PC-3 (cell line): ENCODE measurements at regions of chr11 and their contacts with region 1.

Region 1: DNA sequence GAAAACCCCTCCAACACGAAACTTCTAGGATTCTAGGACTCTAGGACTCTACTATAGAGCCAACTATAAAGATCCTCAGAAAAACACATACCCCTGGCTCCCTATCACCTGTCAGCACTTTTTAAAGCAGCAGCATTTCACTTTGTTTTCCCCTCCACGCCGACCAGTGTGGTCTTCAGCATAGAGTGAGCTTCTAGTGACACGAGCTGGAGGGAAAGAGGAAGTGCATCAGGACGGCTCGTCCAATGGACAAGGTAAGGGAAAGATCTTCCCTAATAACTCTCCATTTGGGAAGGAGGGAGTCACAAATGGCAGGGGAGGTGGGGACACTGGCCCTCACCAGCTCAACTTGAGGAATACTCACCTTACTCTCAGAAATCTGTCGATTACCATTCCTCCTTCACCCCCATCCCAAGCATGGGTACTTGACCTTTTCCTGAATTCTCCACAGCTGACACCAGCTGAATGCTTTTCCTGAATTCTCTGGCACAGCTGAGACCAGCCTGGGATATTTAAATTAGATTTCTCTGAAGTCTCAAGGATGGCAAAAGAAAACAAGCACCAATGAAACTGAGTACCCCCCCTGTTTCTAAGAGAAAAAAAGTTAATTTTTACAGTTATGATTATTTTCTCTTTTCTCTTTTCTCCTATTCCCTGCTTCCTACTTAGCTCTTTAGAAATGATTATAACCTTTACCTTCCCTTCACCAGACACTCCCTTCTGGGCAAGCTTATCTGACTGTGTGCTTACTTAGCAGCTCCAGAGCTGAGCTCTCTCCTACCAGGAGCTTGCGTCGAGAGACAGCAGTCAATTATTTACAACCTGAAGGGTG is 33.3 kb upstream of the NNMT start:
- DNase-seq: peak; percentile 74
- ATAC-seq: peak; percentile 80
- H3K4me3 ChIP-seq: no peak overlapping the region
- H3K27ac ChIP-seq: no peak overlapping the region
- H3K4me1 ChIP-seq: no peaks in the 10 kb centered on the region
- H3K27me3 ChIP-seq: peaks cover 67% of the 10 kb centered on the region
- CTCF ChIP-seq: peak; percentile 89

Region 2: DNA sequence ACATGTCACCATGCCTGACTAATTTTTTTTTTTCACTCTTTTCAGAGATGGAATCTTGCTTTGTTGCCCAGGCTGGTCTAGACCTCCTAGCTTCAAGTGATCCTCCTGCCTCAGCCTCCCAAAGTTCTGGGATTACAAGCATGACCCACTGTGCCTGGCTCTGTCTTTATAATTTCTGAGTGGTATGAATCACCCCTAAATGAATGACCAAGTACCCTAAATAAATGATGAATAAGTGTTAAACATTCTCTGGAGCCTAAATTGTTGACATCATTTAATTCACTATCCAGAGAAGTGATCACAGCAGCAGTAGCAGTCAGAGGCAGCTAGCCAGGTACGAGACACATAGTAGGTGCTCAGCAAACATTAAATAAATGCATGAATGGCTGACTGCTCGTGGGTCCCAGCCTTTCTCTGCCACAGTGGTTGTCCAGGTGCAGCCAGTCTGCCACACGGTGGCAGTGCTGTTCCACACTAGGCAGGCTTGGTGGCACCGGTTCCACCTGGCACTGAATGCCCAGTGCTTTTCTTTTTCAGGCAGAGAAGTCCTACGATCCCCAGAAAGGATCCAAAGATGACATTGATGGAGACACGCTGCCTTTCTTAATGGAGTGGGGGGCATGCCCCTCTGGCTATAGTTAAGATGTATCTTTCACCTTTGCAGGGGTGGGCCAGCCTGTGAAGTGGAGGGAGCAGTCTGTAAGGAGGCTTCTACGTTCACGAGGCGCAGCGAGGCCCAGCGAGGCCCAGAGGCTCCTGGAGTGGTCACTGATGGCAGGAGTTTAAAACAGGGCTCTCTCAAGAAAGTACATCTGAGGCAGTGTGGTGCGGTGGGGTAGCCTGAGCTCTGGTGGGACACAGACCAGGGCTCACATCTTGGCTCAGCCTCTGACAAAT is 957.2 kb before region 1 on chr11:
- CTCF ChIA-PET with region 1: no interaction called
- POLR2A ChIA-PET with region 1: no interaction called
- intact Hi-C with region 1: loop called (anchors 5 kb)
- DNase-seq: peak; percentile 90
- ATAC-seq: peak; percentile 100
- H3K4me3 ChIP-seq: no peak overlapping the region
- H3K27ac ChIP-seq: no peak overlapping the region
- H3K4me1 ChIP-seq: 0 out of 2 replicates have a peak, but pooled peaks cover 4% of the 10 kb centered on the region
- H3K27me3 ChIP-seq: peaks cover 3% of the 10 kb centered on the region; the same call in 1 of the 2 replicates
- CTCF ChIP-seq: peak; percentile 99

Region 3: GRCh38 chr11:113806406-113806805 is 456.5 kb before region 1 on chr11:
- CTCF ChIA-PET with region 1: interaction called, 3 read pairs
- POLR2A ChIA-PET with region 1: no interaction called
- intact Hi-C with region 1: loop called (anchors 2 kb)
- DNase-seq: peak; percentile 59
- ATAC-seq: peak; percentile 92
- H3K4me3 ChIP-seq: no peak overlapping the region
- H3K27ac ChIP-seq: no peak overlapping the region
- H3K4me1 ChIP-seq: peaks cover 5% of the 10 kb centered on the region; the same call in 1 of the 2 replicates
- H3K27me3 ChIP-seq: no peaks in the 10 kb centered on the region
- CTCF ChIP-seq: peak; percentile 77

Region 4: DNA sequence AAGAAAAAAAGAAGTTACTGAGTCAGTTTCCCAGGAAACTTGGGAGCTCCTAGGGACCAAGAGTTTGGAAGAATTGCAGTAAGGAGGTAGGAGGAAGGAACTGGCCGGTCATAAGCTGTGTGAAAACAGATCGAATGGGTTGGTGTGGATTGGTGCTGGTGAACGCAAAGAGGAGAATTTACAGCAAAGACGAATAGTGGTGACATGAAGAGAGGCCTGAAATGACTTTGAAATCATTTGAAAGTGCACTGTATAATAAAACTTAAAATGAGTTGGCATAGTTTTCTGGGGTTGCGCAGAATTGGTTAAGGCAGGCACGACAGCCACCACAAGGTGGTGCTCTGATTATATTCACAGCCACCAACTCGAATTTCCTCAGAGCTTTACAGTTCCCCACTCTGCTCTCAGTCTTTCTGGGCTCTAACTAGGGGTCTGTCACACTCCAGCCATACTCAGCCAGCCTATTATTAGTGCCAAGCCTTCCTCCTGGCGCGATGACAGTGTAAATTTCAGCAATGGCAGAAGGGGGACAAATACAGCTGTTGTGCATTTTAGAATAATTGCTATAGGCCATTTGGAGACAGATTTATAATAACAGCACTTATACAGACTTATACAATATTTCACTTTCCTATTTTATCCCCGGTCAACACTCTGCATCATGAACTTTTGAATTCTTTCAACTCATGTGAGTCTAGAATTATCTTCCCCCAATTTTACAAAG is 366.6 kb before region 1 on chr11:
- CTCF ChIA-PET with region 1: interaction called, 18 read pairs
- POLR2A ChIA-PET with region 1: no interaction called
- intact Hi-C with region 1: loop called (anchors 1 kb)
- DNase-seq: peak; percentile 56
- ATAC-seq: peak; percentile 81
- H3K4me3 ChIP-seq: no peak overlapping the region
- H3K27ac ChIP-seq: no peak overlapping the region
- H3K4me1 ChIP-seq: no peaks in the 10 kb centered on the region
- H3K27me3 ChIP-seq: peaks cover 19% of the 10 kb centered on the region
- CTCF ChIP-seq: peak; percentile 95

Region 5: DNA sequence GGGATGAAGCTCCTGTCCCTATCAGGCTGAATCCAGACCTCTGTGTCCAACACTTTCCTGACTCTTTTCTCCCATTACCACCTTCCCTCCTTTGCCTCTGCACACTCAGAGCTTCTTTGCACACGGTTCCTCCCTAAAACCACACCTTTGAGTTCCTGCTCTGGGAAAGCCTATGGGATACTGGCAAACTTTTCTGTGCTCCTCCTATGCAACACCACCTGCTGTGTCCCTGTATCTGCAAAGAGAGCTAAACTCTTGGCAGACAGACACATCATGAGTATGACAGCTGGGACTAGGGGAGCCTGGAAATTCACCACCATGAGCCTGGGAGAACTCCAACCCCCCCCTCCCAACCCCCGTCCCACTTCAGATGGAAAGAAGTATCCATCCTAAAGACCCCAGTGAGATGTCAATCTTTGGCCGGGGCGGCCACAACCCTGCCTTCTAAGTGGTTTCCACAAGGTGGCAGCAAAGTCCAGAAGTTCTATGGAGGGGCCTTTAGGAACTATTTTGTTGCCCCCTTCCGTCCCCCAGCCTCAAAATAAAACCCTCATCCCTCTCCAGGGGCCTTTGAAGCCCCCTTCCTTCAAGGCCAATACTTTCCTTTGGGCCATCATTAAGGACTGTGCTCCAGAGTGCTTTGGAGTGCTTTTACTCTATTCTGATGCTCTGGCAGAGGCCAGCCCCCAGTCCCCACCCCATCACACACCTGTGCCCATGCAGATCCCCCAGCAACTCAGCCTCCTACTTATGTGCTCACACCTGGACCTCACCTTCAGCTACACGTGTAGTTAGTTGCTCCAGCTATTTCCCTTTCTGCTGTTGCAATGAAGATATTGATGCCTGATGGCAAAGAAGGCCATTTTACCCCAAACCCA is 268.6 kb before region 1 on chr11:
- CTCF ChIA-PET with region 1: interaction called, 10 read pairs
- POLR2A ChIA-PET with region 1: no interaction called
- intact Hi-C with region 1: loop called (anchors 1 kb)
- DNase-seq: peak; percentile 43
- ATAC-seq: peak; percentile 43; the same call in 1 of the 2 replicates
- H3K4me3 ChIP-seq: no peak overlapping the region
- H3K27ac ChIP-seq: no peak overlapping the region
- H3K4me1 ChIP-seq: no peaks in the 10 kb centered on the region
- H3K27me3 ChIP-seq: peaks cover 18% of the 10 kb centered on the region; the same call in 1 of the 2 replicates
- CTCF ChIP-seq: peak; percentile 89

Region 6: GRCh38 chr11:114036156-114036811 is 226.6 kb before region 1 on chr11:
- CTCF ChIA-PET with region 1: no interaction called
- POLR2A ChIA-PET with region 1: interaction called, 3 read pairs
- intact Hi-C with region 1: loop called (anchors 1 kb)
- DNase-seq: peak; percentile 79
- ATAC-seq: peak; percentile 83
- H3K4me3 ChIP-seq: peak overlapping the region; percentile 68
- H3K27ac ChIP-seq: no peak overlapping the region
- H3K4me1 ChIP-seq: peaks cover 20% of the 10 kb centered on the region
- H3K27me3 ChIP-seq: peaks cover 18% of the 10 kb centered on the region
- CTCF ChIP-seq: peak; percentile 91